Mammary epithelial cell (primary cell): ENCODE measurements at regions of chr17 and their contacts with region 1.

Region 1: DNA sequence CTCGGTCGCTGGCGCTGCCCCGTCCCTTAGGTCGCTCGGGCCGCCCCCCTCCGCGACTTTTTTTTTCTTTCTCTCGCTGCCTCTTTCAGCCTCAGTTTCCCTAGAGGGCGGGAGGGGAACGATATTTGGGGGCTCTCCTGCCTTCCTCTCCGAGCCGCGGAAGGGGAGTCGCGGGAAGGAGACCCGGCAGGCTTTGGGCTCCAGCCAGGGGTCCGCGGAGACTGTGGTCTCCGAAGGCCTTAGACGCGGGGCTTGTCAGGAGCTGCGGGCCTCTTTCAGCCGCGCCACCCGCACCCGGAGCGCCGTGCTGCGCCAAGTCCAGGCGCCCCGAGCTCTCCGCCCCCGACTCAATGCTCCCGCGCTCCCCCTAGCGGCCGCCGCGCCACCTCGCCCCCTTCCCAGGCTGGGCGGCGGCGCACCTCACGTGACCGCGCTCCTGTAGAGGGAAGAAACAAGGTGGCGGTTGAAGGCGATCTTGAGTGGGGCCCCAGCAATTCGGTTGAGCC is at the start of gene LRRC37B:
- DNase-seq: peak; percentile 76
- H3K4me3 ChIP-seq: peak within 1 kb of the TSS; percentile 91 to 95 (median 94)
- H3K27ac ChIP-seq: peak within 1 kb of the TSS; percentile 30
- H3K4me1 ChIP-seq: no peaks in the 10 kb centered on the region
- H3K27me3 ChIP-seq: no peaks in the 10 kb centered on the region
- CTCF ChIP-seq: peak; percentile 51 to 87
- total RNA-seq, gene LRRC37B: 8.0 to 13.6 TPM

Region 2: GRCh38 chr17:31533546-31534155 is 473.4 kb before region 1 on chr17:
- CTCF ChIA-PET with region 1: no interaction called
- dilution Hi-C with region 1: no loop called
- in situ Hi-C with region 1: no loop called
- intact Hi-C with region 1: no loop called
- DNase-seq: peak; percentile 69
- H3K4me3 ChIP-seq: no peak overlapping the region
- H3K27ac ChIP-seq: no peak overlapping the region
- H3K4me1 ChIP-seq: peaks cover 11% of the 10 kb centered on the region
- H3K27me3 ChIP-seq: no peaks in the 10 kb centered on the region
- CTCF ChIP-seq: peak; percentile 4 to 19

Region 3: GRCh38 chr17:32136856-32137255 is 129.8 kb after region 1 on chr17:
- CTCF ChIA-PET with region 1: interaction called, 5 read pairs
- dilution Hi-C with region 1: no loop called
- in situ Hi-C with region 1: loop called (anchors 5 to 10 kb)
- intact Hi-C with region 1: loop called (anchors 1 kb)
- DNase-seq: no peak
- H3K4me3 ChIP-seq: no peak overlapping the region
- H3K27ac ChIP-seq: no peak overlapping the region
- H3K4me1 ChIP-seq: peaks cover 8% of the 10 kb centered on the region
- H3K27me3 ChIP-seq: no peaks in the 10 kb centered on the region
- CTCF ChIP-seq: no peak

Region 4: DNA sequence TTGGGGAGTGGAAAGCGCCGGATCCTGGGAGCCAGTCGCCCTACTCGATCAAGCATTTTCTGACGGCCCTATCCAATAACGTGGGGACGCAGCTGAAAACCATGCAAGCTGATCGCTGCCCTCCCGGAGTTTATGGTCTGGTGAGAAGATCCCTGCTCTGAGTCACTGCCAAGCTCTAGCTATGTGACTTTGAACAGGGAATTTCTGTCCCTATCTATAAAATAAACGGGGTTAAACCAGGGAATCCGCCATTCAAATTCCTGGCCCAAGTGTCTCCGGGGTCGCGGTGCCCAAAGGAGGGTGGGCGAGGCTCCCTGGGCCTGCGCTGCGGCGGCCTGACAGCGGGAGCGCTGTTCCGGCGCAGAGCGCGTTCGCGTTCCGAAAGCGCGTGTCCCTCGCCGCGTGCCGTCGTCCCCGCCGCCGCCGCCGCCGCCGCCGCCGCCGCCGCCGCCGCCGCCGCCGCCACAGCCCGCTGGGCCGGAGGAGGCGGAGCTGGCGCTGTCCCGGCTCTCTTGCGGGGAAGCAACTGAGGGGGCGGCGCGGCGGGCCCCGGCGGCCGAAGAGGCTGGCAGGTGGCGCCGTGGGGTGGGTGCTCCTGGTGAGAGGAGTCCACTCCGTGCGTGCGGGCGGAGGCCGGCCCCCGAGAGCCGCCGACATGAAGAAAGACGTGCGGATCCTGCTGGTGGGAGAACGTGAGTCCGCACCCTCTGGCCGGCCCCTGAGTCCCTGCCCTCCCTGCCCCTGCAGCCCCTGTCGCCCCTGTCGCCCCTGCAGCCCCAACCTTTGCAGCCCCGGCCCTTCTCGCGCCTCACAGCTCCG is 135.2 kb after region 1 on chr17 and contains the start of gene RHOT1:
- CTCF ChIA-PET with region 1: interaction called, 5 read pairs
- dilution Hi-C with region 1: no loop called
- in situ Hi-C with region 1: loop called (anchors 5 to 10 kb)
- intact Hi-C with region 1: no loop called
- DNase-seq: peak; percentile 86
- H3K4me3 ChIP-seq: peak within 1 kb of the TSS; percentile 75 to 100 (median 100)
- H3K27ac ChIP-seq: peak within 1 kb of the TSS; percentile 70
- H3K4me1 ChIP-seq: peaks cover 13% of the 10 kb centered on the region
- H3K27me3 ChIP-seq: no peaks in the 10 kb centered on the region
- CTCF ChIP-seq: peak; percentile 13 to 63
- total RNA-seq, gene RHOT1: 20.3 to 28.3 TPM

Region 5: DNA sequence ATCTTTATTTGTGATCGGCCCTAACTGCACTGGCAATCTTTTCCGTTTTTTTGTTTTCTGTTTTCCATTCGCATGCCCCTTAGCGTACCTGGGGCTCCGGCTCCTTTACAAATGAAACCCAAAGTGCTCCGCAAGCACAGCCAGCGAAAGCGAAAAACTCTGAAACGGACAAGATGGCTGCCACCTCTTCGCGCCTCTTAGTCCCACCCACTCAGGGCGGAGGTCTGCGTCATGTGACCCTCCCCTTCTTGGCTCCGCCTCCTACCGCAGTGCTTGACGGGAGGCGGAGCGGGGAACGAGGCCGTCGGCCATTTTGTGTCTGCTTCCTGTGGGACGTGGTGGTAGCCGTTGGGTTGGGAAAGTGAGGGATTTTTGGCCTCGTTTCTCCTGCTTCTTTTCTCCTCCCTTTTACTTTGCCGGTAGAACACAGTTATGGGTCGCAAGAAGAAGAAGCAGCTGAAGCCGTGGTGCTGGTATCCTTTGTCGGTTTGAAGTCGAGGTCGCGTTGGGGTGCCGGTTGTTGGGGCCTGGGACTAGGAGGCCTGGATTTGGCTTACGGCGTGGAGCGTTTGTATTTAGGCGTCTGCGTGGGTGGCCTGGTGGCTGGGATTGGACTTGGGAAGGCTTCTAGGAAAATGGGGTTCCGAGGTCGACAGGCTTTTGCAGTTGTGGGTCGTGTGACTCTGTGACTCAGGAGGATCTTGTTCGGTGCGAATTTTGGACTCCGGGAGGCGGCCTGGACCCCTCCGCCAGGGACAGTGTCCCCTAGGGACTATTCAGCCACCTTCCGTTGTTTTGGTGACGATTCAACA is 343.1 kb after region 1 on chr17 and contains the start of gene ZNF207:
- CTCF ChIA-PET with region 1: no interaction called
- dilution Hi-C with region 1: no loop called
- in situ Hi-C with region 1: loop called in 1 of 2 experiments (anchors 25 kb)
- intact Hi-C with region 1: no loop called
- DNase-seq: peak; percentile 94
- H3K4me3 ChIP-seq: peak within 1 kb of the TSS; percentile 63 to 98 (median 96)
- H3K27ac ChIP-seq: peak within 1 kb of the TSS; percentile 99
- H3K4me1 ChIP-seq: peaks cover 20% of the 10 kb centered on the region
- H3K27me3 ChIP-seq: no peaks in the 10 kb centered on the region
- CTCF ChIP-seq: peak in 1 of 2 donors; percentile 4
- total RNA-seq, gene ZNF207: 134 to 169 TPM